ENCODE measurements at regions of chr13 and their contacts with region 1.

Region 1: DNA sequence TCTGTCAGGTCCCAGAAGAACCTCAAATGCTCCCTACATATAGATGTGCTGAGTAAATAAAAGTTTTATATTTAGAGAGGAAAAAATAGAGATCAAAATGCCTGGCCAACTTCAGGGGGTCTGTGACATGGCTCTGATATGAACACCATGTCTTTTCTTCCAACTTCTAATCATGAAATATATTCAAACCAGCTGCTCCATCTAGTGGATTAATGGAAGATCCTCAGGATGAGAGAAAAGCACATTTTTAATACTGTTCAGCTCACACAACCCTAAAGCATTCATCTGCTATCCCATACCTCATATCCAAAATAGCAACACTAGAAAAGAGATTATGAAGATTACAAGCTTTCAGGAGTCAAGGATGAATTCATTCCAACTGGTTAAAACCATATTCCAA is 56.0 kb upstream of the DOCK9 start:
- DNase-seq: no peak
- ATAC-seq: peak; percentile 41 to 88 (median 80)
- H3K4me3 ChIP-seq: no peak overlapping the region
- H3K27ac ChIP-seq: peak overlapping the region in 2 of 10 donors; percentile 3 to 11
- H3K4me1 ChIP-seq: peaks cover 0 to 22% (median 7%) of the 10 kb centered on the region in 9 donors
- H3K27me3 ChIP-seq: peaks cover 0 to 77% (median 0%) of the 10 kb centered on the region in 7 donors
- CTCF ChIP-seq: peak; percentile 23 to 77 (median 63)

Region 2: DNA sequence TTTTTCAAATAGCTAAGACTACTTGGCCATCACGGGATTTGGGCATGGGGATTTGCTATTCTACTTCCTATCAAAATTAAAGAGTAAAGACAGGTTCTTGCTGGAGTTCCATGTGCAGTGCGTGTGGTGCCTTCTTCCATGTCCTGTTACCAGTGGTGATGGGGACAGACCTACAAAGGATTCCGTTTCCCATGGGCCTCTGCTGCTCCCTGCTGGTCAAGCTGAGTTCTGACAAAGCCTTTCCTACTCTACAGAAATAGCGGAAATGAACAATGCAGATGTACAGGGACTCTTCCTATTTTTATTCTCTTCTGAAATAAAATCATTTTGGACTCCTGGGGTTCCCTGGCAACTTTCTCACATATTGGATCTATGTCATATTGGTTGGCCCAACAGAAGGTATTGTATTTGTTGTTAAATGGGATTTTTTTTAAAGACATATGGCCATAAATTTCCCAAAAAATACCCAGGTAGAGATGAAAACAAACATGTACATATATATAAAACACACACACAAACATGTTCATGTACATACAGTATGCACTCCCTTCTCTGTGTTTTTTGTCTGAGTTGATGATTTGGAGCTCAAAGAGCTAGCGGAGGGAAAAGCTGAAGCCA is 190.8 kb before region 1 on chr13:
- intact Hi-C with region 1: loop called in 7 of 10 experiments (anchors 1 to 5 kb)
- DNase-seq: peak; percentile 72 to 74
- ATAC-seq: peak; percentile 65 to 90 (median 84)
- H3K4me3 ChIP-seq: no peak overlapping the region
- H3K27ac ChIP-seq: peak overlapping the region in 1 of 10 donors; percentile 48
- H3K4me1 ChIP-seq: peaks cover 0 to 23% (median 8%) of the 10 kb centered on the region in 9 donors
- H3K27me3 ChIP-seq: no peaks in the 10 kb centered on the region
- CTCF ChIP-seq: peak; percentile 71 to 90 (median 89)

Region 3: GRCh38 chr13:98879957-98880356 is 153.9 kb before region 1 on chr13:
- intact Hi-C with region 1: loop called in 4 of 10 experiments (anchors 5 to 10 kb)
- DNase-seq: no peak
- ATAC-seq: no peak
- H3K4me3 ChIP-seq: no peak overlapping the region
- H3K27ac ChIP-seq: no peak overlapping the region
- H3K4me1 ChIP-seq: peaks cover 0 to 15% (median 0%) of the 10 kb centered on the region in 9 donors
- H3K27me3 ChIP-seq: no peaks in the 10 kb centered on the region
- CTCF ChIP-seq: no peak

Region 4: DNA sequence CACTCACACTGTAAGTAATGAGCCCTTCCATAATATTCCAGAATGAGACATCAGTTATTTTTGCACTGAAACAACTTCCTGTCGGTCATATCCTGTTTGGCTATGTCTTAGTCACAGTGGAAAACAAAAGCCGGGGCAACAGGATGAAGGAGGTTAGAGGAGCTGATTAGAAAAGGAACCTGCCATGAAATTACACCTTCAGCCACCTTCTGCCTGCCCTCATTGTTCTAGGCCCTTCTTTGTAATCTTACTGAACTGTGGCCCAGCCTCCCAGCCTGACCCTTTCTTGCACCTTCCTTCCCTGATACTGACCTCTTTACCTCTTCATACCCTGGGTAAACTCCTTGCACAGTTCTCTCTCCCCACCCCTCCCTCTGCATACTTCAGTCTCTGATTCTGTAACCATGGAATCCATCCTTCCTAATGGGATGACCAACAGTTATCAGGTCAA is 123.3 kb before region 1 on chr13:
- intact Hi-C with region 1: loop called in 1 of 10 experiments (anchors 5 kb)
- DNase-seq: peak in 1 of 2 donors; percentile 56
- ATAC-seq: peak; percentile 83 to 96 (median 92)
- H3K4me3 ChIP-seq: no peak overlapping the region
- H3K27ac ChIP-seq: peak overlapping the region; percentile 61 to 81 (median 73)
- H3K4me1 ChIP-seq: peaks cover 4 to 65% (median 33%) of the 10 kb centered on the region in 9 donors
- H3K27me3 ChIP-seq: no peaks in the 10 kb centered on the region
- CTCF ChIP-seq: no peak

Region 5: DNA sequence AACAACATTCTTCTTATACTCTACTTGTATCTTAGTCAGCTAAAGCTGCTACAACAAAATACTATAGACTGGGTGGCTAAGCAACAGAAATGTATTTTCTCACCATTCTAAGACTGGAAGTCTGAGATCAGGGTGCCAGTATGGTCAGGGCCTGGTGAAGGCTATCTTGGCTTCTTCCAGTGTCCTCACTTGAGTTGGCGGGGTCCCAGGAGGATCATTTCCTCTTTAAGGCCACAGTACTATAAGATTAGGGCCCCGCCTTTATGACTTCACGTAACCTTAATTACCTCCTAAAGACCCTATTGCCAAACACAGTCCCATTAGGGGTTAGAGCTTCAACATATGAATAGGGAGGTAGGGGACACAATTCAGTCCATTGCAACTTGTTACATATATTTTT is 25.2 kb before region 1 on chr13:
- intact Hi-C with region 1: loop called in 1 of 10 experiments (anchors 1 kb)
- DNase-seq: peak in 1 of 2 donors; percentile 21
- ATAC-seq: peak in 4 of 8 donors; percentile 31 to 62 (median 50)
- H3K4me3 ChIP-seq: no peak overlapping the region
- H3K27ac ChIP-seq: peak overlapping the region in 5 of 10 donors; percentile 6 to 69 (median 45)
- H3K4me1 ChIP-seq: peaks cover 2 to 66% (median 50%) of the 10 kb centered on the region in 9 donors
- H3K27me3 ChIP-seq: peaks cover 0 to 11% (median 0%) of the 10 kb centered on the region in 7 donors
- CTCF ChIP-seq: no peak